HCT116 (cell line): ENCODE measurements at regions of chr17 and their contacts with region 1.

Region 1: DNA sequence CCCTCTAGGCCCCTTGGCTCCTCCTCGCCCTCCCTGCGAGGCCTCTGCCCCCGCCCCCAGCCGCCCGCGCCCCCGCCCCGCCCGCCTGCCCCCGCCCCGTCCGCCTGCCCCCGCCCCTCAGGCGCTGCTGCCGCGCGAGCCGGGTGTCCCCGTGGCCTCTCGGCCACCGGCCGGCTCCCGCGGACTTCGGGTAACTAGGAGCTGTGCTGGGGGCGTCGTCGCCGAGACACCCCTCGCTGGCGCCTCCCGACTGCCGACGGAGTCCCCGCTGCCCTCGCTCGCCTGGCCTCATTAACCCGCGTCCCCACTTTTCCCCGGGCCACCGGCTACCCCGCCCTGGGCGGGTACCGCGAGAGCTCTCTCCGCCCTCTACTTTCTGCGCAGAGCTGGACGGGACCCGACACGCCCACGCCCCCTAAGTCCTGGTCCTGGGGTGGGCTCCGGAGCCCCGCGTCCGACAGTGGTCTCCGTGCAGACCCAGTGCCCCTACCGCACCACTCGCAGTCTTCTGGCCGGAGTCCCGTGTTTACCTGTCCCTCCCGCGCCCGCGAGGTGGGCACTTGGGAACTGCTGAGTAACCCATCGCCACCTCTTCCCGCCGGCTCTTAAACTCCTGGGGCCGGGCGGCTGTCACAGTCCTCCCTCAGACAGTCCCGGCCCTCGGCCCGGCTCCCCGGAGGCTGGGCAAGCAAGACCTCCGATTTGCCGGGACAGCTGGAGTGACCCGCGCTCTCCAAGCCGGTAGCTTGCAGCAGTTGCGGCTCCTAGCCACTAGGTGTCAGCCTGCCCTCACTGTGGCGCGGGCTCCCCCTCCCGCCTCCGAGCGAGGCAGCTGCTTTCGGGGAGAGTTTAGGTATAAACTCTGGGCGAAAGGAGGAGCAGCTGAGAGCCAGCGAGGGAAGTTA is at the start of gene TLCD1:
- DNase-seq: peak; percentile 89
- ATAC-seq: peak; percentile 50
- H3K4me3 ChIP-seq: peak within 1 kb of the TSS; percentile 59 to 71
- H3K27ac ChIP-seq: peak within 1 kb of the TSS; percentile 89
- H3K4me1 ChIP-seq: peaks cover 40 to 79% of the 10 kb centered on the region in 2 experiments
- H3K27me3 ChIP-seq: no peaks in the 10 kb centered on the region
- CTCF ChIP-seq: peak; percentile 99
- POLR2A ChIP-seq: no peak
- RAD21 ChIP-seq: peak; percentile 100
- total RNA-seq, gene TLCD1: 28.3 TPM

Region 2: DNA sequence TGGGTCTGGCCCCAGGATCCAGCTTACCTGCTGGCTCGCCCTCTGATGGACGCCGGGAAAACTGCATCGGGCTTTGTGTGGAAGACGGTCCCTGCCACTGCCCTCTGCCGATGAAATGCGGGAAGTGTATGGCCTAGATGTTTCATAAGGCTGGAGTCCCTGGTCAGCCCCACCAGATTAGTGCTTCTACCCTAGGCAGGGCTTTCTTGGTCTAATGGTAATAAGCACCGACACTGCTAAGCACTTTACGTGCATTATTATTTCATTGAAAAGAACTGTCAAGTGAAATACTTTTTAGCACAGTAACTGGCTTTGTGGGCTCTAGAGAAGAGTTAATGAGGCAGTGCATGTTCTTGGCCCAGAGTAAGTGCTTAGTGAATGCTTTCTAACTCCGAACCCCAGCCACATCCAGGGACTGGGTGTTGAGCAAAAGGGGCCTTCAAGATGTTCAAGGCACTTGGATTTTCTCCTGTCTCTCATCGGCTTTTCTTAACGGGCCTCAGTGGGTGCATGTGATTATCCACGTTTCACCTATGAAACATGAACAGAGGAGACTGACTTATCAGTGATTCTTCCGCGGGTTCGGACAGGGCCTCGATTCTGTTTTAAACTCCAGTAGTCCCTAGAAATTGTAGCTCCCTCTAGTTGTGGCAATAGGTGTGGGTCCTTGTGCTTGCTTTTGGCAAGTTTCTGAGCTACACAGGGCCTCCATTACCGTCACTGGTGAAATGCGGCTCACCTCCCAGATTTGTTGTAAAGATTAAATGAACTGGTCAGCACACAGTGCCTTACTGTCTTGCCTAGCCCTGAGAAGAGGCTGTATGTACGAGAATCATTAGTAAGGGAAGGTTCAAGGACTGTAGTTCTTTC is 23.9 kb after region 1 on chr17:
- CTCF ChIA-PET with region 1: interaction called, 207 read pairs
- POLR2A ChIA-PET with region 1: interaction called, 149 read pairs
- RAD21 ChIA-PET with region 1: interaction called, 13 to 28 read pairs
- intact Hi-C with region 1: loop called (anchors 1 kb)
- DNase-seq: peak; percentile 85
- ATAC-seq: peak; percentile 75
- H3K4me3 ChIP-seq: no peak overlapping the region
- H3K27ac ChIP-seq: peak overlapping the region; percentile 59; the same call in 1 of the 2 replicates
- H3K4me1 ChIP-seq: peaks cover 22 to 46% of the 10 kb centered on the region in 2 experiments
- H3K27me3 ChIP-seq: no peaks in the 10 kb centered on the region
- CTCF ChIP-seq: peak; percentile 98 to 100 (median 98)
- POLR2A ChIP-seq: no peak
- RAD21 ChIP-seq: peak; percentile 92

Region 3: DNA sequence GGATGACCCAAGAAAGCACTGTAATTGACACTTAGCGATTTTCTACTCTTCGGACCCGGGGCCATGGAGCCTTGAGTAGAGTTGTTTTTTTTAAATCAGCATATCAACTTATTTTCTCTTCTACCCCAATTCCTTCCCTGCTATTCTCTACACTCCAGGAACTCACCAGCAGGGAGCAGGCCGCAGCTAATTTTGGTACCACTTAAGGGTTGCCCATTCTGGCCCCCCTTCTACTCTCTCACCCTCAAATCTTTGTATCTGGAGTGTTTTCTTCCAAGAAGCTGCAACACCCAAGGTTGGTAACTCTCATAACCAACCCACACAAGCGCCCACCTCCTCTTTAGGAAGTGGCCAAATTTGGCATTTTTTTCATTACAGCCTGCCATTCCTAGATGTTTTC is 122.8 kb after region 1 on chr17:
- CTCF ChIA-PET with region 1: no interaction called
- POLR2A ChIA-PET with region 1: no interaction called
- RAD21 ChIA-PET with region 1: no interaction called
- intact Hi-C with region 1: loop called (anchors 2 kb)
- DNase-seq: no peak
- ATAC-seq: no peak
- H3K4me3 ChIP-seq: no peak overlapping the region
- H3K27ac ChIP-seq: no peak overlapping the region
- H3K4me1 ChIP-seq: peaks cover 3% of the 10 kb centered on the region in 2 experiments; a peak in 3 of 4 replicates
- H3K27me3 ChIP-seq: no peaks in the 10 kb centered on the region
- CTCF ChIP-seq: 0 out of 6 replicates have a peak, but pooled peaks of 2 of the 3 experiments have one; percentile 8 to 15
- POLR2A ChIP-seq: no peak
- RAD21 ChIP-seq: peak; percentile 15; the same call in 1 of the 2 replicates

Region 4: GRCh38 chr17:28902819-28903545 is 176.5 kb after region 1 on chr17 and contains the start of gene DHRS13:
- CTCF ChIA-PET with region 1: interaction called, 10 read pairs
- POLR2A ChIA-PET with region 1: interaction called, 5 read pairs
- RAD21 ChIA-PET with region 1: interaction called in 1 of 2 experiments, 4 read pairs
- intact Hi-C with region 1: loop called (anchors 2 kb)
- DNase-seq: peak; percentile 91
- ATAC-seq: peak; percentile 95
- H3K4me3 ChIP-seq: peak within 1 kb of the TSS; percentile 70 to 84
- H3K27ac ChIP-seq: peak within 1 kb of the TSS; percentile 69
- H3K4me1 ChIP-seq: peaks cover 11 to 22% of the 10 kb centered on the region in 2 experiments; a peak in 3 of 4 replicates
- H3K27me3 ChIP-seq: no peaks in the 10 kb centered on the region
- CTCF ChIP-seq: peak; percentile 96 to 99 (median 97)
- POLR2A ChIP-seq: peak; percentile 58
- RAD21 ChIP-seq: peak; percentile 68
- total RNA-seq, gene DHRS13: 13.5 TPM

Region 5: DNA sequence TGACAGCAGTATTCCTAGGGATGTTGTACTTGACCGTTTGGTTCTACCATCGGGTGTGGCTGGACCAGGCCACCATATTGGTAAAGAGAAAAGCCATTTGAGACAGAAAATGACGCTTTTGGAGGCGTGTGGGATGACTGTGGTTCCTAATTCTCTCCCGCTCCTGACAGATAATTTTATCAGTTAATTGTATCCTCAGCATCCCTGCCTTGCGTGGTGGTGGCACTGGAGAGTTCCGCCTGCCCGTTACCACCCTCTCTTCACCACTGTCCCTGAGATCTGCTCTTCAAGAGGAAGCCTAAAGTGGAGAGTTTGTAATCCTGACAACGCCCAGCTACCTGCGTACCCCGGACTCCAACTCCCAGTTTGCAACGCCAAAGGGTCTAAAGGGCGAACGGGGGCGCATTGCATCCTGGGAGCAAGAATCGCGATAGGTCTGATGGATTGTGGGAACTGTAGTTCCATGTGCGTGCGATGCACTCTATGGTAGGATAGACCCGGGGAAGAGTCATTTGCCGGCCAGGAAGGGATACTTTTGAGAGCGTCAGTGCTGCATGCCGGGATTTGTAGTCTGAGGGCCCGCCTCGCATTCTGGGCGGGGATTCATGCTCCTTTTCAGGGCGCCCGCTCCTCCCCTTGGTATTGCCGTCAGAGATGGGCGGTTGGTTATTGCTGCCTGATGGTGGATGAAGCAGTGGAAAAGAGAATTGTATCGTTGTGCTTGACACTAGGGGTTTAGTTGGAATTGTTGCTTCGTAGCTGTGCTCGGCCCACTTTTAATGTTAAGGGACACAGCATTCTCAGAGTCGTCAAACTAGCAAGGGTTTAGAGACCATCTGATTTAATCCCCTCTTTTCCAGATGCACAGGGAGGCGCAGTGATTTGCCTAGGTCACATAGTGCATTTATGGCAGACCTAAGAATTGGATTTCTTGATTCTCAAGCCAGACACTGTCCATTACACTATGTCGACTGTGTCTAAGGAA is 225.8 kb after region 1 on chr17:
- CTCF ChIA-PET with region 1: interaction called, 44 read pairs
- POLR2A ChIA-PET with region 1: interaction called, 24 read pairs
- RAD21 ChIA-PET with region 1: interaction called, 9 to 10 read pairs
- intact Hi-C with region 1: loop called (anchors 2 kb)
- DNase-seq: peak; percentile 99
- ATAC-seq: peak; percentile 79
- H3K4me3 ChIP-seq: peak overlapping the region; percentile 69 to 81
- H3K27ac ChIP-seq: peak overlapping the region; percentile 93
- H3K4me1 ChIP-seq: peaks cover 16 to 28% of the 10 kb centered on the region in 2 experiments
- H3K27me3 ChIP-seq: no peaks in the 10 kb centered on the region
- CTCF ChIP-seq: no peak
- POLR2A ChIP-seq: peak; percentile 57
- RAD21 ChIP-seq: no peak

Region 6: GRCh38 chr17:29111816-29112499 is 385.5 kb after region 1 on chr17:
- CTCF ChIA-PET with region 1: interaction called, 34 read pairs
- POLR2A ChIA-PET with region 1: interaction called, 4 read pairs
- RAD21 ChIA-PET with region 1: interaction called in 1 of 2 experiments, 4 read pairs
- intact Hi-C with region 1: loop called (anchors 5 kb)
- DNase-seq: no peak
- ATAC-seq: peak; percentile 77
- H3K4me3 ChIP-seq: no peak overlapping the region
- H3K27ac ChIP-seq: 0 out of 2 replicates have a peak overlapping the region, but pooled peaks have one; percentile 12
- H3K4me1 ChIP-seq: peaks cover 15 to 28% of the 10 kb centered on the region in 2 experiments
- H3K27me3 ChIP-seq: no peaks in the 10 kb centered on the region
- CTCF ChIP-seq: peak; percentile 79 to 97 (median 95)
- POLR2A ChIP-seq: no peak
- RAD21 ChIP-seq: peak; percentile 75